ENCODE measurements at regions of chr15 and their contacts with region 1.

Region 1: DNA sequence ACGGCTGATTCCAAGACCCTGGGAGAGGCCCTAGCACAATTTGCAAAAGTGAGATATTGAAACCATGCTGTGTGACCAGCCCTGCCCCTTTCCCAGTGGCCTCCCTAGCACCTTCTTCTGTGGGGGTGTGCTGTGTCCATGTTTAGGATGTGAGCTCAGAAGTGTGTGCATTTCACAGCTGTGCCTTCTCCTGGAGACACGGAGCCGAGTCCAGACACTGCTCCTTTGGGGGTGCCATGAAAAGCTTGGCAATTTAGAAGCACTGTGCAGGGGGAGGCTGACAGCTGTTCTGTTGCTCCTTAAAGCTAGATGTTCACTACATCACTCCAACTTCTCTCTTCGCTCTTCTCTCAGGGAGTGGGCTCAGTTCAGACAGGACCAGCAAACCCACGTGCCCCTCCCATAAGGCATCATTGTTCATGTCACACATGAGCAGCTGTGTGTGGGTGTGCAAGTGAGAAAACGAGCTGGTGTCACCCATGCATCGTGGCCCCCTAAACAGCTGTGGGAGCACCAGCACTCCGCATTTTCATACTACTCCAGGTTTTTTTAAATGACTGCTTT is 492.6 kb downstream of the GABRG3 start:
- DNase-seq: no peak
- H3K4me3 ChIP-seq: no peak overlapping the region
- H3K27ac ChIP-seq: no peak overlapping the region
- H3K4me1 ChIP-seq: no peaks in the 10 kb centered on the region
- H3K27me3 ChIP-seq: no peaks in the 10 kb centered on the region
- CTCF ChIP-seq: no peak

Region 2: DNA sequence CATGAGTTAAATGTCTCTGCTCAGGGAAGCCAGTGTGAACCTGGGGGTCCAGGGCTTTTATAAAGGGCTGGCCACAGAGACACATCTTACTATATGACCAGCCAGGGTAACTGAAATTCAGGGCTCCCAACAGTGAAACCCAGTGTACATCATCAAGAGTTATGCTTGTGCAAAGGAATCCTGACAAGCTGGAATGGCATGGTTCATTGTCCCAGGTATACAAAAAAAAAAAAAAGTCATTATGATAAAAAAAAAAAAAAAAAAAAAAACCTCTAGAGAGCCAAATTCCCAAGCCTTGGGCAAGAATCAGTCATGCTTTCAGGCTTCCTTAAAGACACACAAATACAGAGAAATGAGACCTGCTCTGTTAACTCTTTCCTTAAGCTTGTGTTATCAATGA is 40.6 kb before region 1 on chr15:
- CTCF ChIA-PET with region 1: no interaction called
- dilution Hi-C with region 1: loop called (anchors 5 kb)
- in situ Hi-C with region 1: no loop called
- intact Hi-C with region 1: no loop called
- DNase-seq: no peak
- H3K4me3 ChIP-seq: no peak overlapping the region
- H3K27ac ChIP-seq: no peak overlapping the region
- H3K4me1 ChIP-seq: no peaks in the 10 kb centered on the region
- H3K27me3 ChIP-seq: no peaks in the 10 kb centered on the region
- CTCF ChIP-seq: no peak

Measured in mammary epithelial cell (primary cell).